ENCODE measurements at regions of chr16 and their contacts with region 1.

Region 1: GRCh38 chr16:24580665-24581064 is 41.3 kb downstream of the RBBP6 start:
- DNase-seq: no peak
- ATAC-seq: no peak

Region 2: GRCh38 chr16:24357511-24357910 is 223.2 kb before region 1 on chr16:
- intact Hi-C with region 1: no loop called
- DNase-seq: no peak
- ATAC-seq: no peak

Region 3: GRCh38 chr16:24418666-24419065 is 162.0 kb before region 1 on chr16:
- intact Hi-C with region 1: no loop called
- DNase-seq: no peak
- ATAC-seq: no peak

Region 4: DNA sequence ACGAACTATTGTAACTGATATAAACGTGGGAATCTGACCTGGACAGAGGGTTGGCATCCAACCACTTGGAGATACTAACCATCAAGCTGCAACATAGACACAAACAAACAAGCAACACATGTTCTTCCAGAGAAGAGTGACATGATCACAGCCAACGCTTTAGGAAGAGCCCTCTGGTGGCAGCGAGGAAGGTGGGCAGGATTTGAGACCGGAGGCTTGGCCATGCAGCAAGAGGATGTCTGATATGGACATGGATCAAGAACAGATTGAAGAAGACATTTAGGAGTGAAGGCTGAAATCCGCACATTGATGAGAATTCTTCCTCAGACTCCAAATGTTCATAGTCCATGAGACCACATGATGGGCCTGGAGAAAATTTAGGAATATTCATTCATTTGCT is 108.5 kb after region 1 on chr16:
- intact Hi-C with region 1: loop called in 1 of 2 experiments (anchors 5 kb)
- DNase-seq: no peak
- ATAC-seq: peak; percentile 44 to 46